Adrenal gland (tissue), 19 donors: ENCODE measurements at regions of chrX and their contacts with region 1.

Region 1: DNA sequence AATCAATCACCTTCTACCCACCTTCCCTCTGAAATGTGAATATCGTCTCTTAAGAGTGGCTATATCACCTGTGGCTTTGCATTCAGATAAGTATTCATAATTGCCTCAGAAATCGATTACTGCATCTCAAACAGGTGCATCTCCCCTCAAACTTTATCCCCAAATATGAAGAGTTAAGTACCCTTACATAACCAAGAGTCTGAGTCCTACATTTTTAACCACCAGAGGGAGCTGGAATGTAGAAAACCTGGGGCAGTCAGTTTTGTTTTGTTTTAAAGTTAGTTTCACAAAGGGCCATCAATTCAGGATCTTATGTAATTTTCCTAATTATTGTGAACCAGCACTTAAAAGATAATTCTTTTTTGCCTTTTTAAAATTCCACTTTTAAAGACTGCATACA is 5.7 kb downstream of the TCEANC start:
- DNase-seq: no peak
- H3K4me3 ChIP-seq: no peak overlapping the region
- H3K27ac ChIP-seq: peak overlapping the region in 1 of 5 donors; percentile 47
- H3K4me1 ChIP-seq: peaks cover 7 to 16% of the 10 kb centered on the region in 2 donors
- H3K27me3 ChIP-seq: no peaks in the 10 kb centered on the region
- CTCF ChIP-seq: peak; percentile 41 to 82 (median 70)
- POLR2A ChIP-seq: no peak

Region 2: GRCh38 chrX:13750204-13750603 is 91.6 kb after region 1 on chrX:
- intact Hi-C with region 1: loop called in 1 of 2 experiments (anchors 5 kb)
- DNase-seq: no peak
- H3K4me3 ChIP-seq: no peak overlapping the region
- H3K27ac ChIP-seq: no peak overlapping the region
- H3K4me1 ChIP-seq: no peaks in the 10 kb centered on the region
- H3K27me3 ChIP-seq: no peaks in the 10 kb centered on the region
- CTCF ChIP-seq: peak in 5 of 6 experiments; percentile 24 to 55 (median 40)
- POLR2A ChIP-seq: no peak

Region 3: GRCh38 chrX:13983734-13984133 is 325.1 kb after region 1 on chrX:
- intact Hi-C with region 1: no loop called
- DNase-seq: peak in 1 of 7 donors; percentile 48
- H3K4me3 ChIP-seq: no peak overlapping the region
- H3K27ac ChIP-seq: no peak overlapping the region
- H3K4me1 ChIP-seq: no peaks in the 10 kb centered on the region
- H3K27me3 ChIP-seq: peaks cover 5% of the 10 kb centered on the region
- CTCF ChIP-seq: no peak
- POLR2A ChIP-seq: no peak